Colonic mucosa (tissue), 4 donors: ENCODE measurements at regions of chr13 and their contacts with region 1.

Region 1: GRCh38 chr13:41302743-41303142 is 8.3 kb upstream of the NAA16 start:
- DNase-seq: no peak
- H3K4me3 ChIP-seq: no peak overlapping the region
- H3K27ac ChIP-seq: no peak overlapping the region
- H3K4me1 ChIP-seq: no peaks in the 10 kb centered on the region
- H3K27me3 ChIP-seq: no peaks in the 10 kb centered on the region
- CTCF ChIP-seq: no peak

Region 2: GRCh38 chr13:41222259-41222852 is 80.4 kb before region 1 on chr13:
- intact Hi-C with region 1: loop called (anchors 2 kb)
- DNase-seq: peak; percentile 56
- H3K4me3 ChIP-seq: no peak overlapping the region
- H3K27ac ChIP-seq: no peak overlapping the region
- H3K4me1 ChIP-seq: no peaks in the 10 kb centered on the region
- H3K27me3 ChIP-seq: no peaks in the 10 kb centered on the region
- CTCF ChIP-seq: peak; percentile 73

Region 3: GRCh38 chr13:41384755-41385503 is 82.2 kb after region 1 on chr13:
- intact Hi-C with region 1: no loop called
- DNase-seq: no peak
- H3K4me3 ChIP-seq: no peak overlapping the region
- H3K27ac ChIP-seq: no peak overlapping the region
- H3K4me1 ChIP-seq: no peaks in the 10 kb centered on the region
- H3K27me3 ChIP-seq: no peaks in the 10 kb centered on the region
- CTCF ChIP-seq: peak; percentile 27